ENCODE measurements at regions of chr20 and their contacts with region 1.

Region 1: GRCh38 chr20:10090588-10091166 is 55.9 kb downstream of the ANKEF1 start:
- DNase-seq: peak; percentile 27
- H3K4me3 Mint-ChIP-seq: no peak overlapping the region
- H3K27ac Mint-ChIP-seq: no peak overlapping the region
- H3K4me1 Mint-ChIP-seq: no peaks in the 10 kb centered on the region
- H3K27me3 Mint-ChIP-seq: peaks cover 3% of the 10 kb centered on the region

Region 2: GRCh38 chr20:9534025-9534424 is 556.7 kb before region 1 on chr20:
- CTCF ChIA-PET with region 1: no interaction called
- intact Hi-C with region 1: no loop called
- DNase-seq: no peak
- H3K4me3 Mint-ChIP-seq: no peak overlapping the region
- H3K27ac Mint-ChIP-seq: no peak overlapping the region
- H3K4me1 Mint-ChIP-seq: no peaks in the 10 kb centered on the region
- H3K27me3 Mint-ChIP-seq: peaks cover 3% of the 10 kb centered on the region

Region 3: DNA sequence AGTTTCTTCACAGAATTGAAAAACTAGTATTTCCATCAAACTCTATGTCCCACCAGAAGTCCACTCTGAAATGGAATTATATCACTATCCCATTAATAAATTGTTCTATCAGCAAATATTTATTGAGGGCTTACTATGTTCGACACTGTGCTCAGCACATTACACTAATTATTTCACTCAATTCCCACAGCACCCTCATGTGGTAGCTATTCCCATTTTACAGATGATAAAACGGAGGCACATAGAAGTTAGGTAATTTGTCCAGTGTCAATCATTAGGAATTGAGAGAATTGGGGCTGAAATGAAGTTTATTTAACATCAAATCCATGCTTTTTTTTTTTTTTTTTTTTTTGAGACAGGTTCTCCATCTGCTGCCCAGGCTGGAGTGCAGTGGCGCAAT is 290.8 kb after region 1 on chr20:
- CTCF ChIA-PET with region 1: no interaction called
- intact Hi-C with region 1: loop called (anchors 10 kb)
- DNase-seq: no peak
- H3K4me3 Mint-ChIP-seq: no peak overlapping the region
- H3K27ac Mint-ChIP-seq: no peak overlapping the region
- H3K4me1 Mint-ChIP-seq: no peaks in the 10 kb centered on the region
- H3K27me3 Mint-ChIP-seq: peaks cover 11% of the 10 kb centered on the region

Region 4: DNA sequence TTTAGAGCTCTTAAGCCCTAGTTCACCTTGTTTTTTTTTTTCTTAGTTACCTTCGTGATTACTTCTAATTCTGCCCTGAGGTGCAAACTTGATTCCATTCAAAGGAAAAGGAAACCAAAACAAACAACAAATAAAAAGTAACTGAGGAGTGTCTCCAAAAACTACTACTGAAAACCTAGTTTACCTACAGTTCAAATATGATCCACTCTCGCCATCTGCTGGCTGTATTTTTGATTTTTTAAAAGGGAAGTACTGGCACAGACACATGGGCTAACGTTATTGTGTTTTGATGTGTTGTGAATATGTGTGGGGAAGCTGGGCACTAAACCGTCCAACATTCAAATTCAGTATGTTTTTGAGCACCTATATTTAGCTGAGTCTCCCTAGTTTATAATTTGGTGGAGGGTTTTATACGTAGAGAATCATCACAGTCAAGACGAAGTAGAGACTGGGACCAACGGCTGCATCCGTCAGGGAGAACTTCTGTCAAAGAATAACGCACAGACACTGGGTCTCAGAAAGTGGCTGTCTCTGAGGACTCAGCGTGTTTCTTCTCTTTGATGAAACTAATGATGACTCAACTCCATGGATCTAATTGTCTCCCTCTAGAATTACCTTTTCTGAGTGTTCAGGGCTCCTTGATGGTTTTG is 1453.5 kb after region 1 on chr20:
- CTCF ChIA-PET with region 1: no interaction called
- intact Hi-C with region 1: loop called (anchors 10 kb)
- DNase-seq: peak; percentile 35
- H3K4me3 Mint-ChIP-seq: no peak overlapping the region
- H3K27ac Mint-ChIP-seq: no peak overlapping the region
- H3K4me1 Mint-ChIP-seq: no peaks in the 10 kb centered on the region
- H3K27me3 Mint-ChIP-seq: peaks cover 4% of the 10 kb centered on the region

Measured in activated naive CD4-positive, alpha-beta T cell treated with anti-CD3 and anti-CD28 coated beads for 36 hours (primary cell).